K562 (cell line): ENCODE measurements at regions of chr1 and their contacts with region 1.

Region 1: DNA sequence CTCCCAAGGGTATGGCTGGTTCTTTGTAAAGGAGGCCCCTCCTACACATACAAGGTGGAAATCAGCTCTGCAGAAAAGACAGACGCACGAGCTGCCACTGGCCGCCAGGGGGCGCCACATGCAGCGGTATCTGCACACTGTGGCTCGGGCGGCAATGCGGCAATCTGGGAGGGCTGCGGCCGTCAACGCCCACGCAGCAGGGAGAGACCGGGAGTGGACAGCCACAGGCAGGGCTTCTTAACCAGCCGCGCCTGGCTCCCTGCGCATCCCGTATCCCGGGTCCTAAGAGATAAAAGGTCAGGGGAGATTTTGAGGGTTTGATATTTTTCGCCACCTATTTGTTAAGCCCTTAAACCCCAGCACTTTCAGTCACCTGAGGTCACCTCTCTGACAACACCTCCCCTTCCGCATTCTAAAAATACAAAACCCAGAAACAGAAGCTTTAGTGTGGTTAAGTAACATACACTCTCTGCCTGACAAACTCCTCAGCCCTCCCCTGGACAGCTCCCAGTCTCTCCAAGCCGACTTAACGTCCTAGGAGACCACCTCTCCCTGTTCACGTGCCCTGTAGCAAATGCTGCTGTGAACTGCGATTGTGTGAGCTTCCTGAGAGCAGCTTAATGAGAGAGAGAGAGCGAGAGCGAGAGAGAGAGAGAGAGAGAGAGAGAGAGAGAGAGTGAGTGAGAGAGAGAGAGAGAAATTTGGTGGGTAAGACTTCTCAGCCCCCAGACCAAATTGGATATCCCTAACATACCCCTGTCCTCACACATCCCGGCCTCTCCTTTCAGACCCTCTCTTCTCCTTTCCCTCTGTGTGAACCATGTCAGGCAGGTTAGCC is 13.5 kb upstream of the KCNA2 start:
- DNase-seq: peak; percentile 93 to 98 (median 96)
- ATAC-seq: peak; percentile 94
- H3K4me3 ChIP-seq: no peak overlapping the region
- H3K27ac ChIP-seq: no peak overlapping the region
- H3K4me1 ChIP-seq: peaks cover 20 to 22% of the 10 kb centered on the region in 2 experiments
- H3K27me3 ChIP-seq: peaks cover 8 to 13% of the 10 kb centered on the region in 2 experiments; a peak in 4 of 5 replicates
- CTCF ChIP-seq: peak; percentile 97 to 99 (median 97)
- EP300 ChIP-seq: peak; percentile 27; the same call in 1 of the 2 replicates
- POLR2A ChIP-seq: no peak
- RAD21 ChIP-seq: peak; percentile 73 to 90

Region 2: DNA sequence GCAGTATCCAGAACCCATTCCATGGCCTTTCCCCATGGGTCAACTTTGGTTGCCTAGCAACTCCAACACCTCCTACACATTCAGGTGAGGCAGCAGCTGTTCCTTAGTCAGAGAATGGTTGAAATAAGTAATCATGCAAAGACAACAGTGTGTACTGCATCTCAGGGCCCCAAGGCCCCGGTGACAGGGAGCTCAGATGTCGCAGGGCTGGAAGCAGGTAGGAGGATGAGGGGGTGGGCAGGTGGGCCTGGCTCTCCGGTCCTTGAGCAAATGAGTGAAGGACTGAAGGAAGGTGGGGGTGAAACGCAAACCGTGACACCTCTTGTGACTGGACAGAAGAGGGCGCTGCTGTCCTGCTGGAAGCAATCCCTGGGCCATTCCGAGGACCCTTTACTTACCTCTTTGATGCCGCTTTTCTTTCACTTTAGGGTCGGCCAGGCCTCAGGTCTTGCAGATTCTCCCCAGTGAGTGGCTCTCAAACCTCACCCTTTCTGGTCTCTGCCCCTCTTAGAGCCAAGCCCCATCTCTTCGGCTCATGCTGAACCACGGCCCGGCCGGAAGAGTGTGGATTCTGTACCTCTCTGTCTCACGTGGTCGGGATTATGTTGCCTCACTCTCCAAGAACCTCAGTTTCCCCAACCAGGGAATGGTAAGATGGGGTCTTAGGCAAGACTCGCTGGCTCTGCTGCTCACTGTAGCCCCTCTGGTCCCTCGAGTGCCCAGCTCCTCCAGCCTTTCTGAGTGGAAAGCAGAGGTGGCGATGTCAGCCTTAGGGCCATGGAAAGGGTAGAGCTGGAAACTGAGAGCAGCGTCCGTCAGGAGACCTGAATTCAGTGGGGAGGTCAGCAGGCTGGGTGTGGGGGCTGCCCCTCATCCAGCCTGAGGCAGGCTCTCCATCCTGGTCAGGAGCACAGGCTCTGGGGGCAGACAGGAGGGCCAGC is 95.0 kb before region 1 on chr1:
- CTCF ChIA-PET with region 1: interaction called, 17 read pairs
- POLR2A ChIA-PET with region 1: no interaction called
- in situ Hi-C with region 1: loop called (anchors 5 kb)
- intact Hi-C with region 1: loop called (anchors 1 kb)
- DNase-seq: peak; percentile 70 to 90 (median 85)
- ATAC-seq: peak; percentile 97
- H3K4me3 ChIP-seq: no peak overlapping the region
- H3K27ac ChIP-seq: no peak overlapping the region
- H3K4me1 ChIP-seq: no peaks in the 10 kb centered on the region; a peak in 2 of 5 replicates
- H3K27me3 ChIP-seq: peaks cover 2 to 36% of the 10 kb centered on the region in 2 experiments; a peak in 3 of 5 replicates
- CTCF ChIP-seq: peak; percentile 89 to 95 (median 95)
- EP300 ChIP-seq: no peak
- POLR2A ChIP-seq: no peak
- RAD21 ChIP-seq: peak; percentile 74 to 94

Region 3: GRCh38 chr1:110554871-110555801 is 64.5 kb before region 1 on chr1:
- CTCF ChIA-PET with region 1: no interaction called
- POLR2A ChIA-PET with region 1: no interaction called
- in situ Hi-C with region 1: no loop called
- intact Hi-C with region 1: loop called (anchors 2 kb)
- DNase-seq: peak; percentile 67 to 87 (median 80)
- ATAC-seq: peak; percentile 96
- H3K4me3 ChIP-seq: no peak overlapping the region
- H3K27ac ChIP-seq: no peak overlapping the region
- H3K4me1 ChIP-seq: peaks cover 0 to 8% of the 10 kb centered on the region in 2 experiments; a peak in 2 of 5 replicates
- H3K27me3 ChIP-seq: peaks cover 2 to 33% of the 10 kb centered on the region in 2 experiments; a peak in 4 of 5 replicates
- CTCF ChIP-seq: peak; percentile 62 to 83 (median 74)
- EP300 ChIP-seq: no peak
- POLR2A ChIP-seq: no peak
- RAD21 ChIP-seq: peak; percentile 31 to 54; a peak in 3 of 4 replicates

Region 4: GRCh38 chr1:110657351-110657750 is 37.7 kb after region 1 on chr1:
- CTCF ChIA-PET with region 1: no interaction called
- POLR2A ChIA-PET with region 1: no interaction called
- in situ Hi-C with region 1: no loop called
- intact Hi-C with region 1: no loop called
- DNase-seq: no peak
- ATAC-seq: no peak
- H3K4me3 ChIP-seq: no peak overlapping the region
- H3K27ac ChIP-seq: no peak overlapping the region
- H3K4me1 ChIP-seq: no peaks in the 10 kb centered on the region
- H3K27me3 ChIP-seq: no peaks in the 10 kb centered on the region
- CTCF ChIP-seq: no peak
- EP300 ChIP-seq: no peak
- POLR2A ChIP-seq: no peak
- RAD21 ChIP-seq: no peak

Region 5: DNA sequence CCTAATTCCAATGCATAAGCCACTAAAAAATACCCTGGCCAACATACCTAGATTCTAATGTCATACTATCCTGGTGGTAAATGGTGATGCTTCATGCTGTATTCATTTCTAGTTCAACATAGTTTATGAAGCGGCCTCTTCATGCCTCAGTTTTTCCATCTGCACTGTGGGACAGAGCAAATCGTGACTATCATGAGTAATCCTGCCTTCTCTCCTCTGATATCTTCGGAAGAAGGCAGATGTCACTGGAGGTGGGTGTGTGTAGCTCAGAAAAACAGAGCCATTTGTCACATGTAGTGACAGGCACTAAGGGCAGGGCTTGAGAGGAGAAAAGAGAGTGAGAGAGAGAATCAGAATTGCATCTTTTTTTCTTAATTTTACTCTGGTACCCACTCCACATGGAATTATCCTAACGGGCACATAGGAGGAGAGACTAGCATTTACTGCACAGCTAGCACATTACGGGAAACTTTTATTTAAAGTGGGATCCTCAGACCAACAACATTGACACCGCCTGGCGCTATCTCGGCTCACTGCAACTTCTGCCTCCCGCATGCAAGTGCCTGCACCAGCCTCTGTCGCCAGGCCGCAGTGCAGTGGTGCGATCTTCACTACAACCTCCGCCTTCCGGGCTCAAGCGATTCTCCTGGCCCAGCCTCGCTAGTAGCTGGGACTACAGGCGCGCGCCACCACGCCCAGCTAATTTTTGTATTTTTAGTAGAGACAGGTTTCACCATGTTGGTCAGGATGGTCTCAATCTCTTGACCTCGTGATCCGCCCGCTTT is 133.5 kb after region 1 on chr1:
- CTCF ChIA-PET with region 1: no interaction called
- POLR2A ChIA-PET with region 1: no interaction called
- in situ Hi-C with region 1: no loop called
- intact Hi-C with region 1: no loop called
- DNase-seq: no peak
- ATAC-seq: peak; percentile 55
- H3K4me3 ChIP-seq: no peak overlapping the region
- H3K27ac ChIP-seq: no peak overlapping the region
- H3K4me1 ChIP-seq: no peaks in the 10 kb centered on the region
- H3K27me3 ChIP-seq: peaks cover 4 to 23% of the 10 kb centered on the region in 2 experiments; a peak in 3 of 5 replicates
- CTCF ChIP-seq: no peak
- EP300 ChIP-seq: no peak
- POLR2A ChIP-seq: no peak
- RAD21 ChIP-seq: no peak

Region 6: DNA sequence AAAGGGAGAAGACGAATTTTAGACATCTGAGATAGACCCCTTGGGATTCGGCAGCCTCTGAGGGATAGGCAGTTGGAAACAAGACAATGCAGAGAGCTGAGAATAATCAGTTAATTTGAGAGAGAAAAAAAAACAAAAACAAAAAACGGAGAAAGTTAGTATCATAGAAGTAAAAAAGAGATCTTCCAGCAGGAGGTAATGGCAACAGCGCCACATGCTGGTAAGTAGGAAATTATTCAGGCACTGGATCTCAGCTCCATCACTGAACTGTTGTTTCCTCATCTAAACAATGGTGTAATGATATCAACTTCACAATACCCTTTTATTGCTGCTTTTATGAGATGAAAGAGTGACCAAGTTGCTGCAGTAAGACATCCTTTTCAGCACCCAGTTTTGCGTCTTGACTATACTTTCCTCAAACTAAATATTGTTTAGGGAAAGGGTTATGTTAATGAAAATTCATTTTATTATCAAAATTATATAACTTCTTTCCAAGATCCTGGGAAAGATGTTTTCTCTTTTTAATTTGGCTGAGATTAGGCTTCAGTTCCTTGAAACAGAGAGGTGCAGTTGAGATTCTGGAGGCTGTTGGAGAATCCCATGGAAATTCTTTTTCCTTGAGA is 146.5 kb after region 1 on chr1:
- CTCF ChIA-PET with region 1: interaction called, 6 read pairs
- POLR2A ChIA-PET with region 1: interaction called, 5 read pairs
- in situ Hi-C with region 1: no loop called
- intact Hi-C with region 1: loop called (anchors 1 kb)
- DNase-seq: peak; percentile 57 to 65 (median 58)
- ATAC-seq: peak; percentile 74; the same call in 2 of the 3 replicates
- H3K4me3 ChIP-seq: no peak overlapping the region
- H3K27ac ChIP-seq: no peak overlapping the region
- H3K4me1 ChIP-seq: no peaks in the 10 kb centered on the region
- H3K27me3 ChIP-seq: no peaks in the 10 kb centered on the region; a peak in 1 of 5 replicates
- CTCF ChIP-seq: peak; percentile 78 to 95 (median 80)
- EP300 ChIP-seq: no peak
- POLR2A ChIP-seq: no peak
- RAD21 ChIP-seq: peak; percentile 63 to 90

Region 7: GRCh38 chr1:110780600-110781484 is 161.2 kb after region 1 on chr1:
- CTCF ChIA-PET with region 1: interaction called, 3 read pairs
- POLR2A ChIA-PET with region 1: no interaction called
- in situ Hi-C with region 1: no loop called
- intact Hi-C with region 1: loop called (anchors 1 kb)
- DNase-seq: peak; percentile 81 to 89 (median 86)
- ATAC-seq: peak; percentile 93
- H3K4me3 ChIP-seq: no peak overlapping the region
- H3K27ac ChIP-seq: no peak overlapping the region
- H3K4me1 ChIP-seq: no peaks in the 10 kb centered on the region
- H3K27me3 ChIP-seq: peaks cover 5 to 16% of the 10 kb centered on the region in 2 experiments; a peak in 2 of 5 replicates
- CTCF ChIP-seq: peak; percentile 89 to 95 (median 94)
- EP300 ChIP-seq: no peak
- POLR2A ChIP-seq: no peak
- RAD21 ChIP-seq: peak; percentile 71 to 92

Region 8: GRCh38 chr1:110916669-110917306 is 297.2 kb after region 1 on chr1:
- CTCF ChIA-PET with region 1: no interaction called
- POLR2A ChIA-PET with region 1: no interaction called
- in situ Hi-C with region 1: no loop called
- intact Hi-C with region 1: no loop called
- DNase-seq: peak; percentile 72 to 94 (median 80)
- ATAC-seq: peak; percentile 96
- H3K4me3 ChIP-seq: 0 out of 2 replicates have a peak overlapping the region, but pooled peaks have one; percentile 2
- H3K27ac ChIP-seq: peak overlapping the region; percentile 88
- H3K4me1 ChIP-seq: peaks cover 5 to 23% of the 10 kb centered on the region in 2 experiments; a peak in 4 of 5 replicates
- H3K27me3 ChIP-seq: no peaks in the 10 kb centered on the region
- CTCF ChIP-seq: no peak
- EP300 ChIP-seq: peak; percentile 79
- POLR2A ChIP-seq: peak; percentile 50
- RAD21 ChIP-seq: peak in 1 of 2 experiments; percentile 15; a peak in 1 of 4 replicates

Region 9: DNA sequence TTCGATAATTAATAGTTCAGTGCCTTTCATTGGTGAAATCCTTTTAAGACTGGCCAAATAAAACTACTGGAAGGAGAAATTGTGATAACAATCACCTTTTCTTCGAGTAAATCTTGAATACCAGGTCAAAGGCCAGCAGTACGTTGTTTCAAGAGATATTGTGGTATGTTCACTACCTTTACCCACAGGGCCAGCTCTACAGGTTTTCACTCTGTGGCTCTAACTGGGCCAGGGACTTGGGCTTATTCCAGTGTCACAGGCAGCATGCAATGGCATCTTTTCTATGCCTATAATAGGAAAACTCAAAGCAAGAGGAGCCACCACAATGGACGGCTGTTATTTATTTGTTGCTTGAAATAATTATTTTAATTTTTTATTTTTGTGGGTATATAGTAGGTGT is 370.9 kb after region 1 on chr1:
- CTCF ChIA-PET with region 1: interaction called, 5 read pairs
- POLR2A ChIA-PET with region 1: no interaction called
- in situ Hi-C with region 1: no loop called
- intact Hi-C with region 1: loop called (anchors 5 kb)
- DNase-seq: no peak
- ATAC-seq: no peak
- H3K4me3 ChIP-seq: no peak overlapping the region
- H3K27ac ChIP-seq: no peak overlapping the region
- H3K4me1 ChIP-seq: no peaks in the 10 kb centered on the region
- H3K27me3 ChIP-seq: peaks cover 0 to 12% of the 10 kb centered on the region in 2 experiments; a peak in 2 of 5 replicates
- CTCF ChIP-seq: no peak
- EP300 ChIP-seq: no peak
- POLR2A ChIP-seq: no peak
- RAD21 ChIP-seq: no peak